Gastrocnemius medialis (tissue), 4 donors: ENCODE measurements at regions of chr19 and their contacts with region 1.

Region 1: DNA sequence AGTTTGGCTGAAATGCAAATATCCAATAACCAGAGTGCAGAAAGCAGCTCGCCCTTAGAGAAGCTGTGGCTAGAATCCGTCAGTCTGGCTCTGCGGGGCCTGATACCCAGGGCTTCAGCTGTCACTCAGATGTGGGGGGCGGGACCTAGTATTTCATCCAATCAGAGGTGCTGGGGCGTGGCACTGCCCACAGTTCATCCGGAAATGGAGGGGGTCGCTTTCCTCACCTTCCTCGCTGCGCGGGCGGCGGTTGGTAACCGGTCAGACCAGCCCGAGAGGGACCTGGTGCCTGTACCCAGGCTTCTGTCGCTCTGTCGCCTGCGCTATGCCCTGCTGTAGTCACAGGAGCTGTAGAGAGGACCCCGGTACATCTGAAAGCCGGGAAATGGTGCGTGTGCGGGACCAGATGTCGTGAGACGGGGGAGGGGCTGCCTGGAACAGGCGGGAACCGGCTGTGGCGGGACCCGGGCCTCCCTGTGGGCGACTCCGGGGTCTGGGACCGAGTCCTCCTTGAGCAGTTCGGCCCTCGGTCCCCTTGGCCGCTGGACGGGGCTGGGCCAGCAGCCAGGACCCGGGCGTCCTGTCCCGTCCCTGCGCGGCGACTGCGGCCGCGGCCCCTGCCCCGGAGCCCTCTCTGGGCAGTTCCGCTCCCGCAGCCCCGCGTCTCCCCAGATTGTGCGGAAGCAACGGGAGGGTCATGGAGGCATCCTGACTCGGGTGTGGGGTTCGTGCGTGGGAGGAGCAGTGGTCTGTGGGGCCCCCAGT is at the start of gene ZNF700:
- DNase-seq: peak; percentile 92
- ATAC-seq: peak; percentile 98 to 99
- H3K4me3 ChIP-seq: peak within 1 kb of the TSS; percentile 88 to 98 (median 88)
- H3K27ac ChIP-seq: peak within 1 kb of the TSS; percentile 89 to 94 (median 92)
- H3K4me1 ChIP-seq: peaks cover 4 to 20% of the 10 kb centered on the region in 2 donors
- H3K27me3 ChIP-seq: no peaks in the 10 kb centered on the region
- CTCF ChIP-seq: no peak
- POLR2A ChIP-seq: peak; percentile 64 to 77
- total RNA-seq, gene ZNF700: 1.3 to 5.8 (median 4.0) TPM

Region 2: GRCh38 chr19:11633223-11633622 is 291.8 kb before region 1 on chr19:
- in situ Hi-C with region 1: no loop called
- intact Hi-C with region 1: no loop called
- DNase-seq: no peak
- ATAC-seq: no peak
- H3K4me3 ChIP-seq: no peak overlapping the region
- H3K27ac ChIP-seq: no peak overlapping the region
- H3K4me1 ChIP-seq: no peaks in the 10 kb centered on the region
- H3K27me3 ChIP-seq: peaks cover 0 to 2% (median 0%) of the 10 kb centered on the region in 3 donors
- CTCF ChIP-seq: no peak
- POLR2A ChIP-seq: no peak

Region 3: DNA sequence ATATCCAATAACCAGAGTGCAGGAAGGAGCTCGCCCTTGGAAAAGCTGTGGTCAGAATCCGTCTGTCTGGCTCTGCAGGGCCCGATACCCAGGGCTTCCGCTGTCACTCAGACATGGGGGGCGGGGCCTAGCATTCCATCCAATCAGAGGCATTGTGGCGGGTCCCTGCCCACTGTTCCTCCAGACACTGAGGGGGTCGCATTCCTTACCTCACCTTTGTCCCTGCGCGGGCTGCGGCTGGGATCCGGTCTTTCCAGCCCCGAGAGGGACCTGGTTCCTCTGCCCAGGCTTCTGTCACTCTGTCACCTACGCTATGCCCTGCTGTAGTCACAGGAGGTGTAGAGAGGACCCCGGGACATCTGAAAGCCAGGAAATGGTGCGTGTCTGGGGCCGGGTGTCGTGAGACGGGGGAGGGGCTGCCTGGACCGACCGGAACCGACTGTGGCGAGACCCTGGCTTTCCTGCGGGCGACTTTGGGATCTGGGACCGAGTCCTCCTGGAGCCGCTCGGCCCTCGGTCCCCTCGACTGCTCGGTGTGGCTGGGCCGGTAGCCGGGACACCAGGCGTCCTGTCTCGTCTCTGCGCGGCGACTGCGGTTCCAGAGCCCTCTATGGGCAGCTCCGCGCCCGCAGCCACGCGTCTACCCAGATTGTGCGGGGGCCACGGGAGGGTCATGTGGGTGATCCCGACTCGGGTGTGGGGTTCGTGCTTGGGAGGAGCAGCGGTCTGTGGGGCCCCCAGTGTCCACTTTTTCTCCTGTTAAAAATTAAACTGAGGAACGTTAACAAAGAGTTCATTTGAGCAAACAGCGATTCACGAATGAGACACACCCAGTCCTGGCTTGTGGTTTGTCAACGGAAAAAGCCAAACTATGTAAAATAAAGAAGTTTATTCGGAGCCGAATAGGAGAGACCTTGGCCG is 37.2 kb before region 1 on chr19 and contains the start of gene ZNF69:
- in situ Hi-C with region 1: no loop called
- intact Hi-C with region 1: loop called (anchors 2 kb)
- DNase-seq: peak; percentile 67 to 70
- ATAC-seq: peak; percentile 94 to 95
- H3K4me3 ChIP-seq: peak within 1 kb of the TSS; percentile 58 to 82 (median 76)
- H3K27ac ChIP-seq: peak within 1 kb of the TSS; percentile 75 to 82 (median 80)
- H3K4me1 ChIP-seq: peaks cover 8% of the 10 kb centered on the region in 2 donors
- H3K27me3 ChIP-seq: no peaks in the 10 kb centered on the region
- CTCF ChIP-seq: peak in 4 of 5 experiments; percentile 18 to 54 (median 34)
- POLR2A ChIP-seq: no peak
- total RNA-seq, gene ZNF69: 0.22 to 2.8 (median 1.8) TPM

Region 4: DNA sequence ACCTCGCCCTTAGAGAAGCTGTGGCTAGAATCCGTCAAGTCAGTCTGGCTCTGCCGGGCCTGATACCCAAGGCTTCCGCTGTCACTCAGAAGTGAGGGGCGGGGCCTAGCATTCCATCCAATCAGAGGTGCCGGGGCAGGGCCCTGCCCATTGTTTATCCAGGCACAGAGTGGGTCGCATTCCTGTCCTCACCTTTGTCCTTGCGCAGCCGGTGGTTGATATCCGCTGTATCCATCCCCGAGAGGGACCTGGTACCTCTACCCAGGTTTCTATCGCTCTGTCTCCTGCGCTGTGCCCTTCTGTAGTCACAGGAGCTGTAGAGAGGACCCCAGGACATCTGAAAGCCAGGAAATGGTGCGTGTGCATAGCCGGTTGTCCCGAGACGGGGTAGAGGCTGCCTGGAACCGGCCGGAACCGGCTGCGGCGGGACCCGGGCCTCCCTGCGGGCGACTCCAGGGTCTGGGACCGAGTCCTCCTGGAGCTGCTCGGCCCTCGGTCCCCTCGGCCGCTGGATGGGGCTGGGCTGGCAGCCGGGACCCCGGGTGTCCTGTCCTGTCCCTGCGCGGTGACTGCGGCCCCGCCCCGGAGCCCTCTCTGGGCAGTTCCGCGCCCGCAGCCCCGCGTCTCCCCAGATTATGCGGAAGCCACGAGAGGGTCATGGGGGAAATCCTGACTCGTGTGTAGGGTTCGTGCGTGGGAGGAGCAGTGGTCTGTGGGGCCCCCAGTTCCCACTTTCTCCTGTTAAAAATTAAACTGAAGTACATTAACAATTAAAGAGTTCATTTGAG is 40.0 kb after region 1 on chr19 and contains the start of gene ZNF763:
- in situ Hi-C with region 1: no loop called
- intact Hi-C with region 1: loop called (anchors 2 kb)
- DNase-seq: peak; percentile 81 to 89
- ATAC-seq: peak; percentile 96 to 98
- H3K4me3 ChIP-seq: peak within 1 kb of the TSS; percentile 67 to 88 (median 76)
- H3K27ac ChIP-seq: peak within 1 kb of the TSS; percentile 78 to 88 (median 86)
- H3K4me1 ChIP-seq: peaks cover 11 to 15% of the 10 kb centered on the region in 2 donors
- H3K27me3 ChIP-seq: no peaks in the 10 kb centered on the region
- CTCF ChIP-seq: no peak
- POLR2A ChIP-seq: peak; percentile 28 to 56
- total RNA-seq, gene ZNF763: 0.46 to 0.80 (median 0.54) TPM

Region 5: GRCh38 chr19:12064590-12065538 is 139.8 kb after region 1 on chr19 and contains the start of gene ZNF844:
- in situ Hi-C with region 1: no loop called
- intact Hi-C with region 1: loop called (anchors 10 kb)
- DNase-seq: peak; percentile 93 to 97
- ATAC-seq: peak; percentile 96 to 97
- H3K4me3 ChIP-seq: peak within 1 kb of the TSS; percentile 63 to 92 (median 82)
- H3K27ac ChIP-seq: peak within 1 kb of the TSS; percentile 85 to 97 (median 92)
- H3K4me1 ChIP-seq: peaks cover 0 to 4% of the 10 kb centered on the region in 2 donors
- H3K27me3 ChIP-seq: no peaks in the 10 kb centered on the region
- CTCF ChIP-seq: no peak
- POLR2A ChIP-seq: peak; percentile 80 to 95
- total RNA-seq, gene ZNF844: 2.2 to 5.7 (median 4.9) TPM

Region 6: DNA sequence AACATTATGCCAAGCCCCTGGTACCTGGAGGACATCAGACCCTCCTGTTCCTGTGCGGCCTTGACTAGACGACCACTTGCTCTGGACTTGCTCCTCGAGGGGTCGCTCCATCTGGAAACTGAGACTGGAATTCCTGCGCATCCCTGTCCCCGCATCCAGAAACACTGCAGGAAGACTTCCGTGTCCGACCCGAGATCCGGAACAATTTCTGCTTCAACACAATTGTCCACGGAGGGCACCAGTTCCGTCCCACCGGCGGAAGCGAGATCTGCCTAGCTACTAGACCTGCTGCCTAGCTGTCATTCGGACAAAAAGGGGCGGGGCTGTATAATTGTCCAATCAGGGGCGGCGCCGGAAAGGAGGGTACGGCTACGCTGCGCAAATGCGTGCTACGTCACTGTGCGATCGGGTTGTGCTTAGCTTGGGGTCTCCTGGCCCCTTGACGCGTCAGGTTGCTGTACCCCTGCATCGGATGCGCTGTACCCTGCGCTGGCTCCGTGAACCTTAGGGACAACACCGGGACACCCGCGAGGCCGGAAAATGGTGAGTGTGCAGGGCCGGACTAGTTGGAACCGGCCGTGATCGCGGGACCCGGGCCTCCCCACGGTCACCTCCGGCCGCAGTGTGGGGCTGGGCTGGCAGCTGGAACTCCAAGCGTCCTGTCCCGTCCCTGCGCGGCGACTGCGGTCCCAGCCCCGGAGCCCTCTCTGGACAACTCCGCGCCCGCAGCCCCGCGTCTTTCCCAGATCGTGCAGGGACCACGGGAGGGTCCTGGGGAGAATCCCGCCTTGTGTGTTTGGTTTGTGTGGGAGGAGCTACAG is 685.7 kb after region 1 on chr19 and contains the starts of genes ZNF490 and ZNF791:
- in situ Hi-C with region 1: no loop called
- intact Hi-C with region 1: loop called (anchors 2 kb)
- DNase-seq: peak; percentile 99
- ATAC-seq: peak; percentile 99 to 100
- H3K4me3 ChIP-seq: peak within 1 kb of the TSS; percentile 81 to 100 (median 91)
- H3K27ac ChIP-seq: peak within 1 kb of the TSS; percentile 98 to 100 (median 99)
- H3K4me1 ChIP-seq: peaks cover 23 to 45% of the 10 kb centered on the region in 2 donors
- H3K27me3 ChIP-seq: no peaks in the 10 kb centered on the region
- CTCF ChIP-seq: no peak
- POLR2A ChIP-seq: peak; percentile 90 to 95
- total RNA-seq, gene ZNF490: 2.5 to 4.9 (median 2.9) TPM
- total RNA-seq, gene ZNF791: 7.6 to 10.9 (median 8.8) TPM